PC-3 (cell line): ENCODE measurements at regions of chr7 and their contacts with region 1.

Region 1: GRCh38 chr7:82985144-82985802 is 177.4 kb downstream of the PCLO start:
- DNase-seq: peak; percentile 91
- ATAC-seq: peak; percentile 95
- H3K4me3 ChIP-seq: no peak overlapping the region
- H3K27ac ChIP-seq: peak overlapping the region; percentile 60
- H3K4me1 ChIP-seq: peaks cover 23% of the 10 kb centered on the region
- H3K27me3 ChIP-seq: no peaks in the 10 kb centered on the region
- CTCF ChIP-seq: no peak

Region 2: DNA sequence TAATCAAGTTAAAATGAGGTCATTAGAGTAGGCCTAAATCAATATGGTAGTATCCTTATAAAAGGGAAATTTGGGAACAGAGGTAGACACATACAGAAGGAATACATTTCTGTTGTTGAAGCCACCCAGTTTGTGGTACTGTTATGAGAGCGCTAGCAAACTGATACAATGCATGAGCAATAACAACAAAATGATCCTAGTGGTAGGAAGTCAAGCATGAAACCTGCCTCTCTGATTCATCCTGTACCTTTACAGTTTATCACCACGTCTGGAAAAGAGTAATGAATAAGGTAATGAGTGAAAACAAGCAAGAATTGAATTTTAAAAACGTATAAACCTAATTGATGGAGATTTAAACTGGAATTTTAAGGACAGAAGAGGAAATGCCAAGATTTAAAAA is 39.8 kb before region 1 on chr7:
- CTCF ChIA-PET with region 1: no interaction called
- POLR2A ChIA-PET with region 1: no interaction called
- intact Hi-C with region 1: loop called (anchors 1 kb)
- DNase-seq: peak; percentile 74
- ATAC-seq: peak; percentile 97
- H3K4me3 ChIP-seq: peak overlapping the region; percentile 34; the same call in 1 of the 2 replicates
- H3K27ac ChIP-seq: peak overlapping the region; percentile 80
- H3K4me1 ChIP-seq: peaks cover 18% of the 10 kb centered on the region
- H3K27me3 ChIP-seq: no peaks in the 10 kb centered on the region
- CTCF ChIP-seq: no peak